CD8-positive, alpha-beta T cell (primary cell): ENCODE measurements at regions of chr9 and their contacts with region 1.

Region 1: GRCh38 chr9:34451545-34451944 is 6.8 kb downstream of the FAM219A start:
- DNase-seq: no peak
- ATAC-seq: no peak
- H3K4me3 ChIP-seq: no peak overlapping the region
- H3K4me3 Mint-ChIP-seq: no peak overlapping the region
- H3K27ac ChIP-seq: no peak overlapping the region
- H3K27ac Mint-ChIP-seq: no peak overlapping the region
- H3K4me1 ChIP-seq: peaks cover under 1% of the 10 kb centered on the region
- H3K4me1 Mint-ChIP-seq: peaks cover 8% of the 10 kb centered on the region
- H3K27me3 ChIP-seq: no peaks in the 10 kb centered on the region
- H3K27me3 Mint-ChIP-seq: no peaks in the 10 kb centered on the region
- CTCF ChIP-seq: no peak

Region 2: GRCh38 chr9:34463901-34464232 is 12.3 kb after region 1 on chr9:
- CTCF ChIA-PET with region 1: no interaction called
- POLR2A ChIA-PET with region 1: no interaction called
- intact Hi-C with region 1: loop called in 1 of 2 experiments (anchors 1 kb)
- DNase-seq: no peak
- ATAC-seq: no peak
- H3K4me3 ChIP-seq: no peak overlapping the region
- H3K4me3 Mint-ChIP-seq: no peak overlapping the region
- H3K27ac ChIP-seq: no peak overlapping the region
- H3K27ac Mint-ChIP-seq: no peak overlapping the region
- H3K4me1 ChIP-seq: no peaks in the 10 kb centered on the region
- H3K4me1 Mint-ChIP-seq: peaks cover 3% of the 10 kb centered on the region
- H3K27me3 ChIP-seq: no peaks in the 10 kb centered on the region
- H3K27me3 Mint-ChIP-seq: peaks cover under 1% of the 10 kb centered on the region
- CTCF ChIP-seq: no peak